ENCODE measurements at regions of chr13 and their contacts with region 1.

Region 1: GRCh38 chr13:41259875-41260501 is 3.4 kb downstream of the MTRF1 start:
- DNase-seq: no peak
- H3K4me3 ChIP-seq: no peak overlapping the region
- H3K27ac ChIP-seq: no peak overlapping the region
- H3K4me1 ChIP-seq: peaks cover 2% of the 10 kb centered on the region
- H3K27me3 ChIP-seq: no peaks in the 10 kb centered on the region
- CTCF ChIP-seq: no peak
- EP300 ChIP-seq: no peak
- POLR2A ChIP-seq: no peak

Region 2: DNA sequence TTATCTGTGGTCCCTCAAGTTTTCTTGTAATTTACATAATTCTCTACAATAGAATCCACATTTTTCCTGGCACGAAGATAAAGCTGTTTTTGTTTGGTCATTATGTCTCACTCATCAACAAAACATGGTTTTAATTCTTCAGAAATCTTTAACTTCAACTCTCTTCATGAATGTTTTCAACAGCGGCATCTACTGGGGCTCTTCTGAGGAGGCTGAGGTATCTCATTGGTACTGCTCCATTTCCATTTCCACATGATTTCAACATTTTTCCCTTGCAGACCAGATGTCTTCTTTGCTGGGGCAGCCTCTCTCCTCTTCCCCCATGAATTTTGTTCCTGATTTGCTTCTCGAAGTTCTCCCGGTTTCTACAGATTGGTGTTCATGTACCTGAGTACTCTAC is 59.9 kb before region 1 on chr13:
- intact Hi-C with region 1: loop called in 1 of 4 experiments (anchors 1 kb)
- DNase-seq: no peak
- H3K4me3 ChIP-seq: no peak overlapping the region
- H3K27ac ChIP-seq: no peak overlapping the region
- H3K4me1 ChIP-seq: no peaks in the 10 kb centered on the region
- H3K27me3 ChIP-seq: no peaks in the 10 kb centered on the region
- CTCF ChIP-seq: no peak
- EP300 ChIP-seq: no peak
- POLR2A ChIP-seq: no peak

Measured in ovary (tissue), 10 donors.